ENCODE measurements at regions of chr18 and their contacts with region 1.

Region 1: GRCh38 chr18:62844850-62845643 is 129.7 kb downstream of the PHLPP1 start:
- DNase-seq: no peak
- H3K4me3 Mint-ChIP-seq: peak overlapping the region; percentile 70
- H3K27ac Mint-ChIP-seq: peak overlapping the region; percentile 82
- H3K4me1 Mint-ChIP-seq: peaks cover 51% of the 10 kb centered on the region
- H3K27me3 Mint-ChIP-seq: no peaks in the 10 kb centered on the region

Region 2: DNA sequence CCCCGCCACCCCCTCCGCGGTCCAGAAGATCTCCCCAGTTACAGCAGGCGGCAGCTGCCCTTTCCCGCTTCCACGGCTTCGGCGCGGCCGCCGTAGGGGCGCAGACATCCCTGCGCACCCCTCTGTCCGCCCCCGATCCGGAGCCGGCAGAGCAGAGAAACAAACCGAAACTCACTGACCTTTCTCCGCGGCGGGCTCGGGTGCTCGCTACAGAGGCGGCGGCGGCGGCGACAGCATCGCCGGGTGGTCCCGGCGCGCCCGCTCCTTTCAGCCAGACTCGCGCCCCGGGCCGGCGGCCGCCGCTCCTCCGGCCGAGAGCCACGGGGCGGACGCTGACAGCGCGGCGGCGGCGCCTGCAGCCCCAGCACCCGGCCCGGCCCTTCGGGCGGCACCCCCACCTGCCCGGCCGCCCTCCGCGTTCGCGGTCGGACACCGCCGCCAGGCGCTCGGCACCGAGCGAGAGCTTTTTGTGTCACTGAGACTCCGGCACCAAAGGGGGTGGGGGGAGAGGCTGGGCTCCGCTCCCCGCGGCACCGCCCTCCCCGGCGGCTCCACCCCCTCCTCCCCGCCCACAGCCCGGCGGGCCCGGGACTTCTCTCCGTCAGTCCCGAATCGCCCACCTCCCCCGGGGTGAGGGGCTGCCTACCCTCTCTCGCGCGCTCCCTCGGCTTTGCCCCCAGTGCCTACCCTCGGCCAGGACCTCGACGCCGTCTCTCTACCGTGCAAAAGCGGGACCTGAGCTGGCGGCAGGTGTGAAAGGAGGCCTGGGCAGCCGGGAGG is 950.9 kb before region 1 on chr18:
- intact Hi-C with region 1: loop called (anchors 10 kb)
- DNase-seq: peak; percentile 53
- H3K4me3 Mint-ChIP-seq: peak overlapping the region; percentile 82
- H3K27ac Mint-ChIP-seq: no peak overlapping the region
- H3K4me1 Mint-ChIP-seq: peaks cover 13% of the 10 kb centered on the region
- H3K27me3 Mint-ChIP-seq: peaks cover 65% of the 10 kb centered on the region

Region 3: GRCh38 chr18:62368100-62368499 is 476.9 kb before region 1 on chr18:
- intact Hi-C with region 1: loop called (anchors 1 kb)
- DNase-seq: no peak
- H3K4me3 Mint-ChIP-seq: peak overlapping the region; percentile 23
- H3K27ac Mint-ChIP-seq: peak overlapping the region; percentile 85
- H3K4me1 Mint-ChIP-seq: peaks cover 73% of the 10 kb centered on the region
- H3K27me3 Mint-ChIP-seq: no peaks in the 10 kb centered on the region

Region 4: GRCh38 chr18:62621546-62621945 is 223.5 kb before region 1 on chr18:
- intact Hi-C with region 1: no loop called
- DNase-seq: no peak
- H3K4me3 Mint-ChIP-seq: no peak overlapping the region
- H3K27ac Mint-ChIP-seq: no peak overlapping the region
- H3K4me1 Mint-ChIP-seq: no peaks in the 10 kb centered on the region
- H3K27me3 Mint-ChIP-seq: peaks cover 20% of the 10 kb centered on the region

Region 5: DNA sequence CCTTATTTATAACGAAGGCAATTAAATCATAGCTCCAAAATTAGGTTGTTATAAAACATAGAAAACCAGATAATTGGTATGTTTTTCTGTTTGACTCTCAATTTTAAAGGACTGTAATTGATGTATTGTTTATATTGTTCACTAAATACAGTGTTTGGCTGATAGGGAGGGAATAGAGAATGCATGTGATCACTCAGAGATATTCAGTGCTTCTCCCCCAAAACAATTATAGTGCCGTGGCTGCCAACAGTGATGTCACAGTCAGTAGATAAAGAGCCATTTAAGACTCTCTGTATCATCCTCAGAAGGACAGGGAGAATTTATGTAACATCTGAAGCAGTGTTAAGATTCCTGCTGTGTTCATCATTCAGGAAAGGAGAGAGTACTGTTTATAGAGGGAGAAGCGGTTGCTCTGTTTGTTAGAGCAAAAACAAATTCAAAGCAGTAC is 60.1 kb before region 1 on chr18:
- intact Hi-C with region 1: loop called (anchors 1 kb)
- DNase-seq: no peak
- H3K4me3 Mint-ChIP-seq: no peak overlapping the region
- H3K27ac Mint-ChIP-seq: no peak overlapping the region
- H3K4me1 Mint-ChIP-seq: peaks cover 36% of the 10 kb centered on the region
- H3K27me3 Mint-ChIP-seq: no peaks in the 10 kb centered on the region

Region 6: DNA sequence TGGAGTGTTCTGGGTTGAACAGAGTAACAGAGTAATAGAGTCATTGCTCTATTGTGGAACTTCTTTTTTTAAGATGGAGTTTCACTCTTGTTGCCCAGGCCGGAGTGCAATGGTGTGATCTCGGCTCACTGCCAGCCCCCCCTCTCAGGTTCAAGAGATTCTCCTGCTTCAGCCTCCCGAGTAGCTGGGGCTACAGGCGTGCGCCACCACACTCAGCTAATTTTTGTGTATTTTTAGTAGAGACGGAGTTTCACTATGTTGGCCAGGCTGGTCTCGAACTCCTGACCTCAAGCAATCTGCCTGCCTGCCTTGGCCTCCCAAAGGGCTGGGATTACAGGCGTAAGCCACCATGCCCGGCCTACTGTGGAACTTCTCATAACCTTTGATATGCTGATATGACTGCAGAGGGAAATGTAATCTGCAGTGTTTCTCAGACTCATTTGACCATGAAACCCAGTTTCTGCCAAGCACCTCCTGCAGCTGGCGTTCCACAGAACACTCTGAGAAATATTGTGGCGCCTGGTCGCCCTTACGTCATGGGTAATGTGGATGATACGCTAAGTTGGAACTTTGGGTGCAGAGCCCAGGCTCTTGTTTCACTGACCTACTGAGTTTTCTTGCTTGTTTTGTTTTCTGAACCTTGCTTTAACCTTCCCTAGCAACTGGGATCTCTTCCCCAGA is 260.7 kb after region 1 on chr18:
- intact Hi-C with region 1: loop called (anchors 1 kb)
- DNase-seq: no peak
- H3K4me3 Mint-ChIP-seq: no peak overlapping the region
- H3K27ac Mint-ChIP-seq: no peak overlapping the region
- H3K4me1 Mint-ChIP-seq: peaks cover 37% of the 10 kb centered on the region
- H3K27me3 Mint-ChIP-seq: peaks cover 20% of the 10 kb centered on the region

Region 7: DNA sequence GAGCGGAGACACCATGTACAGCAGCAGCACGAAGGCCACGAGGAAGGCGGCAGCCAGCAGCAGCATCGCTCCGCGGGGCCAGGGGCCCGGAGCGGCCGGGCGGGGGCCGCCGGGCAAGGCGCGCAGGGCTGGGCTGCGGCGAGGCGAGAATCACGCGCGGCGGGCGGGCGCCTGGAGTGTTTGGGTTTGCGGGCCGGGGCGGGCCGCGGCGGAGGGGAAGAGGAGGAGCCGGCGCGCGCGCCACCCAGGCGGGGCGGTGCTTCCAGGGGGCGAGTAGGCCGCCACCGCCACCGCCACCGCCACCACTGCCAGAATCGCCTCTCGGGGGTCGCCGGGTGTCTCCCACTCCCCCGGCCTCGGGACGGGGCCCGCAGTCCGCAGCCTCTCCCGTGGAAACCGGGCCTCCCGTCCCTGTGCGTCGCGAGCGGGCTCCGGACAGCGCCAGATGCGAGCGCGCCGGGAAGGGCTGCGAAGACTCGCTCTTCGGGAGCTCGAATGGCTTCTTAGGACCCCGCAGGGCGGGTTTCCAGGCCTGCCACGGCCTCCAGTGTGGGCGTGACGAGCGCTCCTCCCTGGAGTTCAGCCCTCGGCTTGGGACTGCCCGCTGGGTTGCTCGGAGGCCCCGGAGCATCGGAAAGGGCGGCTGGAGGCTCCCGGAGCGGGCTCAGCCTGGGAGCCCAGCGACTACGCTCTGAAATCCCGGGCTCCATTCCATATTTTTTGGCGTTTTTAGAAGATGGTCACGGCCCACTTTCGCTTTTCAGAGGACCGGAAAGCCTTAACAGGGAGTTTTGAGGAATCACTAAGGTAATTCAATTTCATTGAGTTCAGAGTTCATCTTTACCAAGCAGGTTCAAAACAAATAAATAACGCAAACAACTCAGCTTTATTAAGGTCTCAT is 522.3 kb after region 1 on chr18 and contains the start of gene KDSR:
- intact Hi-C with region 1: loop called (anchors 10 kb)
- DNase-seq: peak; percentile 82
- H3K4me3 Mint-ChIP-seq: peak within 1 kb of the TSS; percentile 93
- H3K27ac Mint-ChIP-seq: peak within 1 kb of the TSS; percentile 83
- H3K4me1 Mint-ChIP-seq: peaks cover 44% of the 10 kb centered on the region
- H3K27me3 Mint-ChIP-seq: no peaks in the 10 kb centered on the region
- total RNA-seq, gene KDSR: 72.2 and 83.5 TPM in 2 replicates

Measured in activated T-helper 1 cell treated with anti-CD3 and anti-CD28 coated beads, Interleukin-12 subunit alpha, Interleukin-12 subunit beta, Interleukin-2, Interleukin-4 antibody, amounts not matched to agents 30 ng/mL and 10 ng/mL and 1 ng/mL, durations not matched to agents 14 hours and 24 hours and 36 hours (primary cell).